HepG2 (cell line): ENCODE measurements at regions of chr11 and their contacts with region 1.

Region 1: DNA sequence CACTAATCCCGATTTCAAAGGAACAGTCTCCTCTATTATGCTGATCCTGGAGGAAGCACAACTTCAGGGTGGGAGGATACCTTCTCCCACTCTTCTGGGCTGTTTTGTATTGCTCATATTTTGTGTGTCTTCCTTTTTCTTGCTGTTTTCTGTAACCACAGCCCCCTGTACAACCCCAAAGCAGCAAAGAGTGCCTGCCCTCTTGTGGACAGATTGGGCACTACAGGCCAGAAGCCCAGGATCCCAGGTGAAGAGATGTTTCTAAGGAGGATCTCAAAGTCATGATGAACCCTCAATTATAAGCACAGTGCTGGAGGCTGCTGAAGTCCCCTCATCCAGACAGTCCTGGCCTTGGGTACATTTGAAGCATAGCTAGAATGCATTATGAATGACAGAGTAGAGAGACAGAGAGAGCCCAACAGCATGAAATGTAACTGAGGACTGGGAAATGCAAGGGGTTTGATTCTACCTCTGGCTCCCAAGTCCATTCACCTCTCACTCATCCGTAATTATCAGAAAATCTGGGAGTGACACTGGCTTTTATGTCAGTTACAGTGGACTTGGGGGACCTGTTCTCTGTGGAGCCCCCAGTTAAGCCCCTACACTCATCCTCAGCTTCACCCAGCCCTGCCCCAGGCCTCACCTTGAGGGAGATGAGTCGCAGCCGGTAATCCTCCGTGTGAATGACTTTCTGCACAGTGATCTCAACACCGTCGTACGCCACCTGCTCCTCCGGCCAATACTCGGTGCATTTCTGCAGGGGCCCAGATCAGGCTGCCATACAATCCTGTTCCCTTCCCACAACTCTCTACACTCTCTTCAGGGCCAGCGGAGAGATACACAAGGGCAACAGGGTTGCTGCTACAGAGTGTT is 6.2 kb upstream of the IGSF22 start:
- DNase-seq: no peak
- ATAC-seq: peak; percentile 64
- H3K4me3 ChIP-seq: no peak overlapping the region
- H3K27ac ChIP-seq: no peak overlapping the region
- H3K4me1 ChIP-seq: no peaks in the 10 kb centered on the region
- H3K27me3 ChIP-seq: peaks cover 6 to 48% of the 10 kb centered on the region in 2 experiments; a peak in 3 of 5 replicates
- CTCF ChIP-seq: peak; percentile 83
- EP300 ChIP-seq: no peak
- POLR2A ChIP-seq: no peak
- RAD21 ChIP-seq: no peak

Region 2: DNA sequence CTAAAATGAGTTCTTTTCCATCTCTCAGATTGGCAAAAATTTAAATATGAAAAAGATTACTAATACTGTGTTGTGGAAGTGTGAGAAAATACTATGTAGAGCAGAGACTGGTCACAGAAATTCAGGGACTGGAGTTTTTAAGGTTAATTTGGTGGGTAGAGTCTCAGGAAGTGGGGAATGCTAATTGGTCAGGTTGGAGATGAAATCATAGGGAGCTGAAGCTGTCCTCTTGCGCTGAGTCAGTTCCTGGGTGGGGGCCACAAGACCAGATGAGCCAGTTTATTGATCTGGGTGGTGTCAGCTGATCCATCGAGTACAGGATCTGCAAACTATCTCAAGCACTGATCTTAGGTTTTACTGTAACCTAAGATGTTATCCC is 63.0 kb before region 1 on chr11:
- CTCF ChIA-PET with region 1: no interaction called
- POLR2A ChIA-PET with region 1: no interaction called
- in situ Hi-C with region 1: no loop called
- intact Hi-C with region 1: loop called (anchors 5 kb)
- DNase-seq: no peak
- ATAC-seq: peak; percentile 25; the same call in 1 of the 3 replicates
- H3K4me3 ChIP-seq: no peak overlapping the region
- H3K27ac ChIP-seq: no peak overlapping the region
- H3K4me1 ChIP-seq: peaks cover 22% of the 10 kb centered on the region
- H3K27me3 ChIP-seq: no peaks in the 10 kb centered on the region; a peak in 1 of 5 replicates
- CTCF ChIP-seq: no peak
- EP300 ChIP-seq: no peak
- POLR2A ChIP-seq: no peak
- RAD21 ChIP-seq: no peak

Region 3: GRCh38 chr11:18706330-18707243 is 25.6 kb before region 1 on chr11:
- CTCF ChIA-PET with region 1: no interaction called
- POLR2A ChIA-PET with region 1: no interaction called
- in situ Hi-C with region 1: no loop called
- intact Hi-C with region 1: no loop called
- DNase-seq: no peak
- ATAC-seq: no peak
- H3K4me3 ChIP-seq: no peak overlapping the region
- H3K27ac ChIP-seq: no peak overlapping the region
- H3K4me1 ChIP-seq: no peaks in the 10 kb centered on the region
- H3K27me3 ChIP-seq: peaks cover 1 to 72% of the 10 kb centered on the region in 2 experiments; a peak in 4 of 5 replicates
- CTCF ChIP-seq: no peak
- EP300 ChIP-seq: no peak
- POLR2A ChIP-seq: no peak
- RAD21 ChIP-seq: no peak